Activated B cell treated with CpG ODN at 0.5 μM for 24 hours (primary cell): ENCODE measurements at regions of chr11 and their contacts with region 1.

Region 1: DNA sequence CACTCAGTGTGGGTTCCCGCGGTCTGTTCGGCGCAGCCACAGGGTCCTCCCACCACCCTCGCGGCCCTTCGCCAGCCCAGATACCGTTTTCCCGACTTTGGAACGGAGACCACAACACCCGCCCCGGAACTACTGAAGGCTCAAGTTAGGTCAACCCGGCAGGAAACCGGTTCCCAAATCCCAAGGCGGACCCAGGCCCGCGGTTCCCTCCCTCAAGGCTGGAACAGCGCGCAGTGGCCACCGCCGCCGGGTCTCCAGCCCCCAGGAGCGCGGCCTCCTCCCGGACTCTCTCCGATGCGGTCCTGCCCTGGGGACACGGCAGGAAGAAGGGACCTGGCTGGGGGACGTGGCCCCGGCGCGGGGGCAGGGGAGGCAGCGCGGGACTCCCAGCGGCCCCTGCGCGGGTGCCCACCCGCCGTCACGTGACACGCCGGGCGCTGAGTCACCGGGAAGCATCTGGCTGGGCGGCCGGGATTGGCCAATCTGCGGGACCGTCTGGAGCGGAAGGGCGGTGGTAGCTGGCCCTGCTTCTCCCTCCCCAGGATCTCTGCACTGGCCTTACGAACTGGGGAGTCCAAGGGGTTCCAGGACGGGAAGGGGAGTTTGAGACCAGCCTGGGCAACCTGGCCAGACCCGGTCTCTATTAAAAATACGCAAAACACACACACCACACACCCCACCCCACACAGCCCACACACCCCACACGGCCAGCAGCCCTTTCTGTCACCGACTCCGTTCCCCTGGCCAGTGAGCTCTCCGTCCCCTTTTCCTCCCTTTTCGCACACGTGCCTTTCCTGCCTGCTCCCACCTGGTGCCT is 21.5 kb upstream of the MALAT1 start:
- DNase-seq: peak; percentile 92
- ATAC-seq: peak; percentile 86
- H3K4me3 Mint-ChIP-seq: peak overlapping the region; percentile 96
- H3K27ac Mint-ChIP-seq: peak overlapping the region; percentile 99
- H3K4me1 Mint-ChIP-seq: peaks cover 24% of the 10 kb centered on the region
- H3K27me3 Mint-ChIP-seq: no peaks in the 10 kb centered on the region
- CTCF ChIP-seq: no peak

Region 2: DNA sequence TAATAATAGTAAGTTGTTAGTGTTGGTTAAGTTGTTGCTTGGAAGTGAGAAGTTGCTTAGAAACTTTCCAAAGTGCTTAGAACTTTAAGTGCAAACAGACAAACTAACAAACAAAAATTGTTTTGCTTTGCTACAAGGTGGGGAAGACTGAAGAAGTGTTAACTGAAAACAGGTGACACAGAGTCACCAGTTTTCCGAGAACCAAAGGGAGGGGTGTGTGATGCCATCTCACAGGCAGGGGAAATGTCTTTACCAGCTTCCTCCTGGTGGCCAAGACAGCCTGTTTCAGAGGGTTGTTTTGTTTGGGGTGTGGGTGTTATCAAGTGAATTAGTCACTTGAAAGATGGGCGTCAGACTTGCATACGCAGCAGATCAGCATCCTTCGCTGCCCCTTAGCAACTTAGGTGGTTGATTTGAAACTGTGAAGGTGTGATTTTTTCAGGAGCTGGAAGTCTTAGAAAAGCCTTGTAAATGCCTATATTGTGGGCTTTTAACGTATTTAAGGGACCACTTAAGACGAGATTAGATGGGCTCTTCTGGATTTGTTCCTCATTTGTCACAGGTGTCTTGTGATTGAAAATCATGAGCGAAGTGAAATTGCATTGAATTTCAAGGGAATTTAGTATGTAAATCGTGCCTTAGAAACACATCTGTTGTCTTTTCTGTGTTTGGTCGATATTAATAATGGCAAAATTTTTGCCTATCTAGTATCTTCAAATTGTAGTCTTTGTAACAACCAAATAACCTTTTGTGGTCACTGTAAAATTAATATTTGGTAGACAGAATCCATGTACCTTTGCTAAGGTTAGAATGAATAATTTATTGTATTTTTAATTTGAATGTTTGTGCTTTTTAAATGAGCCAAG is 52.0 kb before region 1 on chr11:
- CTCF ChIA-PET with region 1: interaction called, 4 read pairs
- POLR2A ChIA-PET with region 1: interaction called, 313 read pairs
- intact Hi-C with region 1: loop called (anchors 2 kb)
- DNase-seq: no peak
- ATAC-seq: peak; percentile 38
- H3K4me3 Mint-ChIP-seq: peak overlapping the region; percentile 100
- H3K27ac Mint-ChIP-seq: peak overlapping the region; percentile 100
- H3K4me1 Mint-ChIP-seq: peaks cover 78% of the 10 kb centered on the region
- H3K27me3 Mint-ChIP-seq: no peaks in the 10 kb centered on the region
- CTCF ChIP-seq: no peak

Region 3: GRCh38 chr11:65454696-65455456 is 22.5 kb before region 1 on chr11:
- CTCF ChIA-PET with region 1: no interaction called
- POLR2A ChIA-PET with region 1: interaction called, 29 read pairs
- intact Hi-C with region 1: loop called (anchors 1 kb)
- DNase-seq: peak; percentile 83
- ATAC-seq: peak; percentile 98
- H3K4me3 Mint-ChIP-seq: peak overlapping the region; percentile 95
- H3K27ac Mint-ChIP-seq: peak overlapping the region; percentile 90
- H3K4me1 Mint-ChIP-seq: peaks cover 32% of the 10 kb centered on the region
- H3K27me3 Mint-ChIP-seq: no peaks in the 10 kb centered on the region
- CTCF ChIP-seq: no peak